Activated CD4-positive, alpha-beta T cell treated with anti-CD3 and anti-CD28 coated beads, Interleukin-2, amount 10 ng/mL, durations not matched to agents 24 days and 14 days (primary cell): ENCODE measurements at regions of chr15 and their contacts with region 1.

Region 1: DNA sequence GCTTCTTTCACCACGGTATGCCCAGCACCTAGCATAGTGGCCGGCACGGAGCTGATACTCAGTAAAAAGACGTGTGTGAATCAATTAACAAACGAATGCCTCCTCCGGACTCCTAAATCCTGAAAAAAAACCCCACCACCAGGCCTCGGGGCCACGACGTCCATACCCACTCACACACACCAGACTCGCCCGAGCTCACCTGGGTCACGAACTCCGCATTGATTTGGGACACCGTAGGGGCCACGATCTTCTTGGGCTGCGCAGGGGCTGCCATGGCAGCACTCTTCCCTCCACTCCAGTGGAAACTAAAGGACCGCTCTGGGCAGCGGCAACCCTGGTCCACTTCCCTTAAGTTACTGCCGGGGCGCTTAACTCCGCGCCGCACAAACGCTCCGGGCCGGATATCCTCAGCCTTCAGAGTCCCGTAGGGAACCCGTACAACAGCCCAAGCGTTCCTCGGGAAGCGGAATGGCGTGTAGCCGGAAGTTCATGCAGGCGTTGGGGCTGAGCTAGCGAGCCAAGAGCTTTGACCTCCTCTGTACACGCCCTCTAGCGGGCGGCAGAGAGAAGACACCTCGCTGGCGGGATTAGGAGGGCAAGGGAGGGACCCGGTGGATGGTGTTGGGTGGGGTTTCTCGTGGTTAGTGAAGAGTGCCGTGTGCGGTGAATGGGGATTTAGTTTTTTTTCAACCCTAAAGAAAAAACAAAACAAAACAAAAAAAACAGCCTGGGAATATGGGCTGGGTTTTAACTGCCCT is at the start of gene AQR:
- DNase-seq: peak; percentile 97
- H3K4me3 Mint-ChIP-seq: peak within 1 kb of the TSS; percentile 100
- H3K27ac Mint-ChIP-seq: peak within 1 kb of the TSS; percentile 93
- H3K4me1 Mint-ChIP-seq: peaks cover 28% of the 10 kb centered on the region
- H3K27me3 Mint-ChIP-seq: no peaks in the 10 kb centered on the region
- total RNA-seq, gene AQR: 47.3 and 50.2 TPM in 2 replicates

Region 2: GRCh38 chr15:34987985-34988873 is 18.7 kb after region 1 on chr15 and contains the start of gene ZNF770:
- intact Hi-C with region 1: loop called (anchors 1 kb)
- DNase-seq: peak; percentile 96
- H3K4me3 Mint-ChIP-seq: peak within 1 kb of the TSS; percentile 97
- H3K27ac Mint-ChIP-seq: peak within 1 kb of the TSS; percentile 99
- H3K4me1 Mint-ChIP-seq: peaks cover 28% of the 10 kb centered on the region
- H3K27me3 Mint-ChIP-seq: no peaks in the 10 kb centered on the region
- total RNA-seq, gene ZNF770: 53.9 and 56.3 TPM in 2 replicates

Region 3: GRCh38 chr15:36579792-36580431 is 1610.4 kb after region 1 on chr15:
- intact Hi-C with region 1: loop called (anchors 10 kb)
- DNase-seq: no peak
- H3K4me3 Mint-ChIP-seq: peak overlapping the region; percentile 84
- H3K27ac Mint-ChIP-seq: peak overlapping the region; percentile 86
- H3K4me1 Mint-ChIP-seq: peaks cover 13% of the 10 kb centered on the region
- H3K27me3 Mint-ChIP-seq: peaks cover 9% of the 10 kb centered on the region